Posterior cingulate gyrus (tissue), 11 donors: ENCODE measurements at regions of chr12 and their contacts with region 1.

Region 1: DNA sequence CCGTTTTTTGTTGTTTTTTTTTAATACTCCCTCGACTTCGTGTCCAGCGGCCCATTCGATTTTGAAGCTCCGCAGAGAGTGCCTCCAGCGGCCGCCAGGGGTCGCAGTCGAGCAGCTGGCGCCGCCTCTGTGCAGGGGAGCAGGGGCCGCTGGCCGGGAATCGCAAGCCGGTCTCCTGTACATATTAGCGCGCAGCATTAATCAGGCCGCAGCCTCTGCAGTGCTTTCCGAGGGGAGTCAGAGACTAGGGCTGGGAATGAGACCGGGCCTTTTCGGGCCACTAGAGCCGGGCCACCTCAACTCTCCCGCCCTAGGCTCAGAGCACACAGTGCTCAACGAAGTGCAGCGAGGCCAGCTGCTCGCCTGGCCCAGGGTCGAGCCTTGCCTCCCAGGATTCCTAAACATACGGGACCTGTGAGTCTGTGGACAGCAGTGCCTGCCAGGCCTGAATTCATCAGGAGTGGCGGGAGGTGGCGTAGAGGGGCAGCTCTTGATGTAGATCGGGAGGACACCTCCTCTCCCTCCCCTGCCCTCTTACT is 81.8 kb downstream of the EMP1 start:
- DNase-seq: peak; percentile 57 to 97 (median 78)

Region 2: DNA sequence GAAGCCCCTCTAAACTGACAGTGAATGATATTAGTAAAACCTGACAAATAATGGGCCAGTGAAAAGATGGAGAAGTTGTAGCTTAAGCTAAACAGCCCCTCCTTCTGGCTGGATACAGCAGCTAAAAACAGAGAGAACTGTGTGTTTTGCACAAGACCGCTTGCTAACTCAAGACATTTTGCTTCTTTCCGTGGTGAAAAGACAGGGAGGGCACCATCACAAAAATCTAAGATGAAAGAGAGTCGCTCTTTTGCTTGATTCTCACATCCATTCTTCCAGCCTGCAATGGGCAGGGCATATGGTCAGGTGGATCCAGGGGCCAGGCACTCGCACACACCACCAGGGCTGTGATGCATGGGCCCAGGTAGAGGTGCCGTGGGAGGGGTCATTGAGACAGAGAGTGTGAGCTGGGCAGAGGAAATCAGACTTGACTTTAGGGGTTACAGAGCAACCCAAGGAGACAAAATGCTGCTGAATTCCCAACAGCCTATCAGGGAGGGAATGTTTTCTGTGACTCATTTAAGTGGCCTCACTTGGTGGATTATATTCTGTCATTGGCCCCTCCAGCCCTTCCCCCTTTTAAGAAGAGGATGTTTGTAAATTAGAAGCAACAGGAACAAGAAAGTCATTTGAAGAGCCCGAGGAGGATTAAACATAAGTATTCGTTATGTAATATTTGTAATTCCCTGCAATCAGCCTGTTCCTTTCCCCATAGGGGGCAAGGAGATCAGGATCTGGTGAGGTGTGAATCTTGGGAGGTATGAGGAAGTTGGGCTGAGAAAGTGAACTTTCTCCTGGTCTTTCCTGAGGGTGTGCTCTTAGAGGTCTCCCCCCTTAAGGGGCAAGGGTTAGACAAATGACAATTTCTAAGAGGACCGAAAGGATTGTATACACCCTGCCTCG is 69.5 kb before region 1 on chr12:
- intact Hi-C with region 1: no loop called
- DNase-seq: no peak

Region 3: GRCh38 chr12:13534645-13535398 is 256.5 kb after region 1 on chr12:
- intact Hi-C with region 1: loop called (anchors 5 kb)
- DNase-seq: peak; percentile 55 to 96 (median 86)

Region 4: DNA sequence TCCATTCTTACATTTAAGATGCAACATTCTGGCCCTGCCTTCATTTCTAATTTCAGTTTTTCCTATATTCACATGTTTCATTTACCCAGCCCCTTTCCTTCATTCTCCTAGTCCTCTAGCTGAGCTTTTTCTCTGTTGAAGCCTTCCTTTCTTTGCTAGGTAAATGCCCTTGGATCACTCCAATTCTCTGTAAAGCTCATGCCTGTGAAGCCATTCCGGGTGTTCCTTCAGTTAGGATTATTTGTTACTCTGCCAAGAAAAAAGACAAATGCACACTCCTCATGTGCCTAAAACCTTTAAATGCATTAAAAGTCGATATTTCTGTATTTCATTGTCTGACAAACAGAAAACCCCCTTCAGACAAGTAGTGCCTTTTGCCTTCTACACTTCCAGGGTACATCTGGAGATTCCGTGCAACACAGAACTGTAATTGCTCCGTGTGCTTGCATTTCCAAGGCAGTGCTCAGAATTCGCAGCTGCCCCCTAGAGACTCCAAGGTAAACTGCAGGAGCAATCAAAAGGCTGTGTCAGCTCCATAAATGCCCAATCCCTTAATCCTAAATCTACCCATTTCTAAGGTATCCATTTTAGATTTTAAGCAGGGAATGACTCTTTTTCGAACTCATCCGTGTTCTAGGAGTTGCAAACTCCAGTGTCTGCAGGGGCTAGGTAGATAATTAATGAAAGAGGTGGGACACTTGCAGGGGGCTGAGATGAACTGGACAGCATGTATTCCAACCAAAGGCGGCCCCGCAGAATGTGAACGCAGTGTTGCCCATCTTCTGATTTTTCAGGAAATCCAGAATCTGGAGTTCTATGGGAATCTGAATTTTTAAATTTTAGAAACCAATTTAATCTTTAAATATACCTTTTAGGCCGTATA is 382.9 kb after region 1 on chr12:
- intact Hi-C with region 1: loop called (anchors 1 kb)
- DNase-seq: peak; percentile 15 to 93 (median 55)

Region 5: DNA sequence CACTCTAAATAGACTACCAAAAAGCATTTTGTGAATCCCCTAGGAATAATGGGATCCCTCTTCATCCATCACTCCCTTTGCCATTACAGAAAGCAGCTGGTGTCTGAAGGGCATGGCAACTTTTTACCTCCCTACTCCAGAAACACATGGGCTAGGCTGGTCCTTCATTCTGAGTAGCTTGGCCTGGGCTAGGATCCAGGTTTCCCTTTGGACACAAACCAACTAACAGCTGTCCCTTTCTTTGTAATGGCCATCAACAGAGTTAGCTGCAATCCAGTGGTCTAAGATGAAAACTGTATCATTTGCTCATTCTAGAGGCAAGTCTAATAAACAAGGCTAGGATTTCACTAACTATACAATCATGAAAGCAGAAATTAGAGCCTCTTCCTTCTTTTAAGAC is 695.7 kb after region 1 on chr12:
- intact Hi-C with region 1: loop called (anchors 10 kb)
- DNase-seq: no peak